ENCODE measurements at regions of chr11 and their contacts with region 1.

Region 1: GRCh38 chr11:100970283-100971164 is 159.1 kb downstream of the PGR start:
- DNase-seq: no peak
- H3K4me3 ChIP-seq: no peak overlapping the region
- H3K27ac ChIP-seq: no peak overlapping the region
- H3K4me1 ChIP-seq: no peaks in the 10 kb centered on the region
- CTCF ChIP-seq: no peak

Region 2: DNA sequence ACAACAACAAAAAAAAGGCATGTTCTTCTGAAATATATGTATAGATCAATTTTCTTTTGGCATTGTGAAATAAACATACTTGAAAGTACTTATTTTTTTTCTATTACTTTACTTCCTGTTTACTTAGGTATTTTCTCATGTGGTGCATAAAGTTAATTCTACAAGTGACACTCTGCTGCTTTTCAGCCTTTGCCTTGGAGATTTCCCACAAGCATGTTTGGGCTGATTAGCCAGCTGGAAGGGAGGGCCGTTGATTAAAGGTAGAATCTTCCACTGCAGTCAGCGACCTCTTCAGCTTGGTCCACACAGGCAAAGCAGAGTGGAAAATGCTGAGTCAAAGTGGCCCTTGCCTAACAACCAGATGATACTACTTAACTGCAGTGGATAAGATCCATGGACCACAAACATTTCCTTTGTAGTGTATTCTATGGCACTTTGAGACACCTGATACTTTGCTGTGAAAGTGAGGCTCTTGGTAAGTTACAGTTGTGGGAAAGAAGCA is 107.4 kb before region 1 on chr11:
- CTCF ChIA-PET with region 1: no interaction called
- POLR2A ChIA-PET with region 1: no interaction called
- intact Hi-C with region 1: no loop called
- DNase-seq: no peak
- H3K4me3 ChIP-seq: no peak overlapping the region
- H3K27ac ChIP-seq: no peak overlapping the region
- H3K4me1 ChIP-seq: peaks cover 10% of the 10 kb centered on the region
- CTCF ChIP-seq: no peak

Region 3: DNA sequence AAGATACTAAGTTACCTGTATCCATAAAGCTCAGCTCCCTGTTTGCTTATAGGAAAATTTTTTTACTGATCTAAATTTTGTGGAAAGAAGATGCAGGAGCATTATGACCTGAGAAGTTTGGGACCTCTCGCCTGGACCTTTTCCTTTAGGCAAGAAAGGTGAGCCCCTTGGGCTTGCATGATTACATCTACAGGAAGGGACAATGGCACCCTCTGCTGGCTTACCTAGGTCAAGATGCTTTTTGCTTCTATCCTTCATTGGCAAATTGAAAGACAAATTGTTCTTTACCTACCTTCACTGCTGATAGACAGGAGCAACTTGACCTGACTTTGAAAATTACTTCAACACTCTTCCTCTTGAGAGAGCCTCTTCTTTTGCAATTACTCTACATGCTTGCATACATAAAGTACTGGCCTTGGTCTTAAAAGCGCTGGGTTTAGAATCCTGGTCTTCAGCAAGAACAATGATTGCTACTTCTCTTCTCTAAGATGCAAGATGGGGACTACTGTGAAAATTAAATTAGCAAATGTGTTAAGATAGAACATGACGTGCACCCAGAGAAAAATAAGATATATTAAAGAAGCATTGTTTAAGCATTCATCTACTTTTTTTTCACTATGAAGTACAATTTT is 466.1 kb after region 1 on chr11:
- CTCF ChIA-PET with region 1: no interaction called
- POLR2A ChIA-PET with region 1: no interaction called
- intact Hi-C with region 1: loop called (anchors 10 kb)
- DNase-seq: peak; percentile 62
- H3K4me3 ChIP-seq: no peak overlapping the region
- H3K27ac ChIP-seq: no peak overlapping the region
- H3K4me1 ChIP-seq: no peaks in the 10 kb centered on the region
- CTCF ChIP-seq: peak; percentile 89

Measured in OCI-LY7 (cell line).